ENCODE measurements at regions of chr3 and their contacts with region 1.

Region 1: DNA sequence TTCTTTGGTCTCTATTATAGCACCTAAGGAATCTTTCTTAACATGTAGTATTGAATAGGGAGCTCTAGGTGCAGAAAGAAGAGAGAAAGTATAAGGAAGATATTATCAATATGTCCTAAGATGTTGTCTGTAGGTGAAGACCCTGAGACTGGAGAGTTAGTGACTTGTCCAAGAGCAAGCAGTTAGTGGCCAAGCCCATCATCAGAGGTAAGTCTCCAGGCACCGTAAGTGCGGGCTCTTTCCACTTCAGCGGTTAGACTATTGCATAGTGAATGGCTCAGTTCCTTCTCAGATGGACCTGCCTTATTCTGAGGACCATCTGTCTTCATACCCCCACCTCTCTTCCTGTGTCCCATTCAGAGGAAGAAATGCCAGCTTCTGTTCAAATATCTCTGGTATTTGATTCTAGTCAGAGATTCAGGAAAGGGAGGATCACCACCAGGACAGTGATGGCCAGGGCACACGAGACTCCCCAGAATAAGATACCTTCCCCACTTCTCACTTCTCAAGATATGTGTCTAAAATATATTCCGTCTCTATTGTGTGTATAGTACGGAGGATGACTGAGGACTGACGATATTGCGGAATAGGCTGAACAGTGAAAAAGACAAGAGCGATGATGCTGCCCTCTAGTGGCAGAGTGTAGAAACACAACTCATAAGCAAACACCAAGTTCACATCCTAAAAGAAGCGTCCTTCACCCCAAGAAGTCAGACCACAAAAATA is 19.1 kb upstream of the ADGRG7 start:
- DNase-seq: peak in 1 of 2 experiments; percentile 67
- H3K4me3 ChIP-seq: peak overlapping the region in 1 of 4 experiments; percentile 37; a peak in 1 of 8 replicates
- H3K27ac ChIP-seq: no peak overlapping the region
- H3K4me1 ChIP-seq: peaks cover 0 to 3% (median 0%) of the 10 kb centered on the region in 4 experiments; a peak in 1 of 7 replicates
- H3K27me3 ChIP-seq: peaks cover 0 to 1% (median 0%) of the 10 kb centered on the region in 4 experiments; a peak in 1 of 7 replicates
- CTCF ChIP-seq: peak in 2 of 3 experiments; percentile 71 to 92; a peak in 3 of 4 replicates
- EP300 ChIP-seq: no peak
- POLR2A ChIP-seq: no peak
- RAD21 ChIP-seq: peak; percentile 91 to 93

Region 2: GRCh38 chr3:100234364-100234763 is 355.9 kb before region 1 on chr3:
- CTCF ChIA-PET with region 1: no interaction called
- POLR2A ChIA-PET with region 1: no interaction called
- DNase-seq: peak in 1 of 2 experiments; percentile 19
- H3K4me3 ChIP-seq: no peak overlapping the region
- H3K27ac ChIP-seq: no peak overlapping the region
- H3K4me1 ChIP-seq: no peaks in the 10 kb centered on the region
- H3K27me3 ChIP-seq: no peaks in the 10 kb centered on the region
- CTCF ChIP-seq: no peak
- EP300 ChIP-seq: no peak
- POLR2A ChIP-seq: no peak
- RAD21 ChIP-seq: no peak

Region 3: GRCh38 chr3:100577382-100578002 is 12.8 kb before region 1 on chr3:
- CTCF ChIA-PET with region 1: interaction called, 60 read pairs
- POLR2A ChIA-PET with region 1: interaction called, 3 read pairs
- DNase-seq: no peak
- H3K4me3 ChIP-seq: no peak overlapping the region; a peak in 1 of 8 replicates
- H3K27ac ChIP-seq: no peak overlapping the region
- H3K4me1 ChIP-seq: peaks cover 0 to 8% (median 1%) of the 10 kb centered on the region in 4 experiments; a peak in 2 of 7 replicates
- H3K27me3 ChIP-seq: no peaks in the 10 kb centered on the region
- CTCF ChIP-seq: no peak; a peak in 1 of 4 replicates
- EP300 ChIP-seq: no peak
- POLR2A ChIP-seq: no peak
- RAD21 ChIP-seq: no peak

Region 4: GRCh38 chr3:100603469-100603868 is 13.2 kb after region 1 on chr3:
- CTCF ChIA-PET with region 1: interaction called, 62 read pairs
- POLR2A ChIA-PET with region 1: no interaction called
- DNase-seq: no peak
- H3K4me3 ChIP-seq: no peak overlapping the region
- H3K27ac ChIP-seq: no peak overlapping the region
- H3K4me1 ChIP-seq: peaks cover 0 to 2% (median 2%) of the 10 kb centered on the region in 4 experiments; a peak in 4 of 7 replicates
- H3K27me3 ChIP-seq: no peaks in the 10 kb centered on the region
- CTCF ChIP-seq: peak in 2 of 3 experiments; percentile 30 to 57; a peak in 2 of 4 replicates
- EP300 ChIP-seq: no peak
- POLR2A ChIP-seq: no peak
- RAD21 ChIP-seq: peak; percentile 50 to 59

Measured in H1 (cell line).